ENCODE measurements at regions of chr10 and their contacts with region 1.

Region 1: DNA sequence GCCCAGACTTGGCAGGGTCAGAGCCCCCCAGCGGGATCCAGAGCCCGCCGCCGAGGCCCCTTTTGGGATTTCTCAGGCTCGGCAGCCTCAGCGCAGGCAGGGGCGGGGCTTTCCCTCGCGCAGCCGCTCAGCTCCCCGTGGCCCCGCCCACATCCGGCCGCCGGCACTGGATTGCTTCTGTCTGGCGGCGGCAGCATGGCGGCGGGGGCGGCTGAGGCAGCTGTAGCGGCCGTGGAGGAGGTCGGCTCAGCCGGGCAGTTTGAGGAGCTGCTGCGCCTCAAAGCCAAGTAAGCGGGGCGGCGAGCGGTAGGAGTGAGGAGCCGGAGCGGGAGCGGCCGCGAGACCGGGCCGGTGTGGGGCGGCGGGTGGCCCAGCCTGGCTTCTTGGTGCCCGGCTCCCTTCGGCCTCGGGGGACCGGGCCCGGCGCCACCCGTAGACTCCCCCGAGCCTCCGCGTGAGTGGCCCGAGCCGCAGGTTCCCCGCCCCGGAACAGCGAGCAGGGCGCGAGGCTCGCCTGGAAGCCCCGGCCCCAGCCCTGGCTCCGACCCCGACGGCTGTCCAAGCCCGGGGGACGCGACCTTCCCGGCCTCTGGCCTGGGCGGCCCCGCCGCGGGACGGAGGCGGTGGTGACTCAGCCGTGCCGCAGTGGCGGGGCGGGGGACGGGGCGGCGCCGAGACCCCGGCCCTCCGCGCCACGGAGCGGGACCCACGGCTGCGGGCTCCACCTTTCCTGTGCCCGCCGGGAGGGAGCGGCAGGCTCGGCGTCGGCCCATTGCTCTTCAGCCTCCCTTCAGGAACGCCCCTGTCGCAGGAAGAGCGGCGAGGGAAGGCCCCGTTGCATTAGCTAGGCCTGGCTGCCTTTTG is at the start of gene GLRX3:
- DNase-seq: peak; percentile 3
- ATAC-seq: peak; percentile 87
- H3K4me3 ChIP-seq: peak within 1 kb of the TSS; percentile 61 to 73
- H3K27ac ChIP-seq: peak within 1 kb of the TSS; percentile 64
- H3K4me1 ChIP-seq: peaks cover 8 to 24% of the 10 kb centered on the region in 2 experiments; a peak in 3 of 4 replicates
- H3K27me3 ChIP-seq: no peaks in the 10 kb centered on the region
- CTCF ChIP-seq: no peak
- POLR2A ChIP-seq: no peak
- RAD21 ChIP-seq: no peak
- total RNA-seq, gene GLRX3: 59.1 TPM

Region 2: DNA sequence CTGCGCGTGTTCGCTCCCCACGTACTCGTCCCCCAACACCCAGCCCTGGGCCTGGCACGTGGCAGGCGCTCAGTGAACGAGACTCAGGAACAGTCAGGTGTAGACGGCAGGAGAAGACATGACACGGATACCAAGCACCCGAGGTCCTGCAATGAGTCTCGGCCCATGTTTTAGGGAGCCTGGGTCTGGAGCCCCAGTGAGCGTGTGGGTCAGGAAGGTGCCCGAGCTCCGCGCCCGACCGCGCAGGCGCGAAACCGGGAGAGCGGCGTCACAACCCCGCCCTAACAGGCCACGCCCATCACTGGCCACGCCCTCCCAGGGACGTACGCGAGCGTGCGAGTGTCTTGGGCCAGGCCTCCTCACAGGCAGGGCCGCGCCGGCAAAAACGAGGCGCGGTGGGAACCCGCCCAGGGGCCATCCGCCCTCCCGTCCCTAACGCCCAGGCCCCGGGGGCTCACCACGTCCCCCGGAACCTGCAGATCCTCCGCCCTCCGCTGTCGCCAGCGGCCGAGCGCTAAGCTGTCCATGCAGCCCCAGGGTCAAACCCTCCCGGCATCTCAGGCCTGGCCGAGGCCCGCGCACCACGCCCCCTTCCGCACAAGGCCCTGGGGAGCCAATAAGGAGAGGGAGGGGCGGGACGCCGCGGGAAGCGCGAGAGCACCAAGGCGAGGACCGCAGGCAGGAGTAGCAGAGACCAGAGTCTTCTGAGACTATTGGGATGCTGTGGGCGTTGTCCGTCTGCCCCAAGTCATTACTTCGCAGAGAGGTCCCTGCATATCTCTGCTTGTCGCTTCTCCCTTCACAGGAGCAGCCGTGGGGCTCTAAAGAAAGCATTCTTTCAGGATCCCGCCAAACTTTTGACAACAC is 26.0 kb before region 1 on chr10 and contains the start of gene C10orf143:
- CTCF ChIA-PET with region 1: interaction called, 16 read pairs
- POLR2A ChIA-PET with region 1: interaction called, 13 read pairs
- RAD21 ChIA-PET with region 1: no interaction called
- intact Hi-C with region 1: loop called (anchors 1 kb)
- DNase-seq: peak; percentile 79
- ATAC-seq: peak; percentile 82
- H3K4me3 ChIP-seq: peak within 1 kb of the TSS; percentile 72 to 73
- H3K27ac ChIP-seq: peak within 1 kb of the TSS; percentile 70
- H3K4me1 ChIP-seq: peaks cover 5 to 18% of the 10 kb centered on the region in 2 experiments
- H3K27me3 ChIP-seq: no peaks in the 10 kb centered on the region
- CTCF ChIP-seq: no peak
- POLR2A ChIP-seq: peak; percentile 8
- RAD21 ChIP-seq: no peak
- total RNA-seq, gene C10orf143: 0.66 TPM